AG04450 (cell line): ENCODE measurements at regions of chr6 and their contacts with region 1.

Region 1: GRCh38 chr6:96659084-96659845 is 96.3 kb downstream of the FHL5 start:
- DNase-seq: no peak
- H3K4me3 ChIP-seq: no peak overlapping the region
- H3K27ac ChIP-seq: no peak overlapping the region
- H3K27me3 ChIP-seq: no peaks in the 10 kb centered on the region
- CTCF ChIP-seq: no peak

Region 2: GRCh38 chr6:96626759-96627364 is 32.4 kb before region 1 on chr6:
- CTCF ChIA-PET with region 1: interaction called, 12 read pairs
- POLR2A ChIA-PET with region 1: no interaction called
- DNase-seq: peak; percentile 1
- H3K4me3 ChIP-seq: no peak overlapping the region
- H3K27ac ChIP-seq: no peak overlapping the region
- H3K27me3 ChIP-seq: no peaks in the 10 kb centered on the region
- CTCF ChIP-seq: peak; percentile 38

Region 3: DNA sequence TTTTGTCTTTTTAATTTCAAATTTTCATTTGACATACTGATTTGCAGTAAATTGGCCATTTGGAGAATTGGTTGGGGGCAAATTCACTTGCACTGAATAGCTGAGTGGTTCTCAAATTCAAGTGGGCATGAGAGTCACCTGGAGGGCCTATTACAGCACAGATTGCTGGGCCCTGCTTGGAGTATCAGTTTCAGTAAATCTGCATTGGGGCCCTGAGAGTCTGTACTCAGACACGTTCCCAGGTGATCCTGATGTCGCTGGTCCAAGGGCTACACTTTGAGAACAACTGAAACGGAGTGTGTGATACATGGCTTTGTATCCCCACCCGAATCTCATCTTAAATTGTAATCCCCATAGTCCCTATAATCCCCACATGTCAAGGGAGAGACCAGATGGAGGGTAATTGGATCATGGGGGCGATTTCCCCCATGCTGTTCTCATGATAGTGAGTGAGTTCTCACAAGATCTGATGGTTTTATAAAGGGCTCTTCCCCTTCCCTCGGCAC is 381.1 kb after region 1 on chr6:
- CTCF ChIA-PET with region 1: no interaction called
- POLR2A ChIA-PET with region 1: no interaction called
- DNase-seq: no peak
- H3K4me3 ChIP-seq: no peak overlapping the region
- H3K27ac ChIP-seq: no peak overlapping the region
- H3K27me3 ChIP-seq: no peaks in the 10 kb centered on the region
- CTCF ChIP-seq: no peak